ENCODE measurements at regions of chr22 and their contacts with region 1.

Region 1: GRCh38 chr22:30289134-30289979 is at the start of gene CASTOR1:
- DNase-seq: peak; percentile 99
- H3K4me3 ChIP-seq: peak within 1 kb of the TSS; percentile 54 to 84 (median 64)
- H3K27ac ChIP-seq: peak within 1 kb of the TSS; percentile 51
- H3K4me1 ChIP-seq: peaks cover 28% of the 10 kb centered on the region
- H3K27me3 ChIP-seq: no peaks in the 10 kb centered on the region
- CTCF ChIP-seq: no peak
- POLR2A ChIP-seq: peak; percentile 60
- total RNA-seq, gene CASTOR1: 7.2 and 8.1 TPM in 2 replicates

Region 2: GRCh38 chr22:30224161-30224857 is 65.0 kb before region 1 on chr22:
- CTCF ChIA-PET with region 1: no interaction called
- POLR2A ChIA-PET with region 1: no interaction called
- dilution Hi-C with region 1: no loop called
- intact Hi-C with region 1: no loop called
- DNase-seq: no peak
- H3K4me3 ChIP-seq: no peak overlapping the region
- H3K27ac ChIP-seq: no peak overlapping the region
- H3K4me1 ChIP-seq: no peaks in the 10 kb centered on the region
- H3K27me3 ChIP-seq: peaks cover 8 to 26% of the 10 kb centered on the region in 2 experiments
- CTCF ChIP-seq: no peak
- POLR2A ChIP-seq: no peak

Region 3: DNA sequence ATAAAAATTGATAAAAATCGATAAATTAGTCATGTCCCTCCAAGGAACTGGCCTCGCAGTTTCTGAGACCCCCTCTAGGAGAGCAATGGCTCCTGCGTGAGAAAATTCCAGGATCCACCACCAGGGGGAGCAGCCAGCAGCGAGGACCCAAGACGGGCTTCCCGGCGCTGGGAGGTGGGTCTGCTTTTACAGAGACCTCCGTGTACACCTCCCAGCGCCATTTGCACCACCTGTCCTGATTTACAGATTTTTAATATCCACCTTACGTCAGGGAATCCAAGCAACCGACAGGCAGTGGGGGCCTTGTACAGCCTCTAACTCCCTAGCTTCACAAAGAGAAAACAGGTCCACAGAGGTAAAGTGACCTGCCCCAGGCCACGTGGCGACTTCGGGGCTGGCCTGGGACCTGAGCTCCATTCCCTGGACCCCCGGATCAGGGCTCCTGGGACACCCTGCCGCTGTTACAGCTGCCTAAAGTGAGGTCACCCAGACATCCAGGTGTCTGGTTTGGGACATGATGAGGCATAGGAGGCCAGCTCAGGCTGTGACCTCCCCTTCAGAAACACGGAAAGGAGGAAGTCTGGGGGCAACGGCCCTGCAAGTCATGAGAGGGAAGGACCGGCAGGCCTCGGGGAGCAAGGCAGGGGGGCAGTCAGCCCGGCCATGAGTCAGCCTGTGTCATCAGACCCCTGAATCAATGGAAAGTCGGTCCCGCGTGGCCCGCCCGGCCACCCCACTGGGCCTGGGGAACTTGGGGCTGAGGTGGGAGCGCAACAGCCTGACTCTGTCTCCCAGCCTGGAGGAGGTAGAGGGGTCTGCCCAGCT is 26.2 kb before region 1 on chr22:
- CTCF ChIA-PET with region 1: interaction called, 12 read pairs
- POLR2A ChIA-PET with region 1: no interaction called
- dilution Hi-C with region 1: no loop called
- intact Hi-C with region 1: loop called (anchors 1 kb)
- DNase-seq: peak; percentile 57
- H3K4me3 ChIP-seq: no peak overlapping the region
- H3K27ac ChIP-seq: no peak overlapping the region
- H3K4me1 ChIP-seq: peaks cover 6% of the 10 kb centered on the region
- H3K27me3 ChIP-seq: no peaks in the 10 kb centered on the region
- CTCF ChIP-seq: peak; percentile 82 to 93
- POLR2A ChIP-seq: no peak

Region 4: DNA sequence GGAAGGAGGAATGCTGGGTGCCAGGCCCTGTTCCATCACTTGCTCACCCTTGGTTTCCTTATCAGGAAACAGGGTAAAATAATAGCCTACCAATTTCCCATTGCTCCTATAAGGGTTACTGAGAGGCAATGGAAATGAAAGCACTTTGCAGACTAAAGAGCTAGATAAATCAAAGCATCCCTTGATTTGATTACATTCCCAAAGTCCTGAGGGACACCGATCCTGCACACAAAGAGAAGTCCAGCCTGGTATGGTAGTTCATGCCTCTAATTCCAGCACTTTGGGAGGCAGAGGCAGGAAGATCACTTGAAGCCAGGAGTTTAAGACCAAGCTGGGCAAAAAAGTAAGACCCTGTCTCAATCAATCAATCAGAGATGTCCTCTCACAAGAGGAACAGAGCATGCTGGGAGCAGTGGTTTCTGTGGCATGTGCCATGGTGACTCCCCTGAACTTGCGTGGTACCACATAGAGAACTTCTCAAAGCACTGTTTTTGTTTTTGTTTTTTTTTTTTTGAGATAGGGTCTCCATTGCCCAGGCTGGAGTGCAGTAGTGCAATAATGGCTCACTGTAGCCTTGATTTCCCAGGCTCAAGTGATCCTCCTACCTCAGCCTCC is 26.7 kb after region 1 on chr22:
- CTCF ChIA-PET with region 1: interaction called, 13 read pairs
- POLR2A ChIA-PET with region 1: no interaction called
- dilution Hi-C with region 1: no loop called
- intact Hi-C with region 1: no loop called
- DNase-seq: no peak
- H3K4me3 ChIP-seq: no peak overlapping the region
- H3K27ac ChIP-seq: no peak overlapping the region
- H3K4me1 ChIP-seq: no peaks in the 10 kb centered on the region
- H3K27me3 ChIP-seq: no peaks in the 10 kb centered on the region
- CTCF ChIP-seq: no peak
- POLR2A ChIP-seq: no peak

Region 5: GRCh38 chr22:30356449-30357235 is 67.3 kb after region 1 on chr22 and contains the starts of genes CCDC157 and SF3A1:
- CTCF ChIA-PET with region 1: interaction called, 17 read pairs
- POLR2A ChIA-PET with region 1: interaction called, 9 read pairs
- dilution Hi-C with region 1: no loop called
- intact Hi-C with region 1: loop called (anchors 1 kb)
- DNase-seq: peak; percentile 95
- H3K4me3 ChIP-seq: peak within 1 kb of the TSS; percentile 64 to 94 (median 84)
- H3K27ac ChIP-seq: peak within 1 kb of the TSS; percentile 81
- H3K4me1 ChIP-seq: peaks cover 15% of the 10 kb centered on the region
- H3K27me3 ChIP-seq: no peaks in the 10 kb centered on the region
- CTCF ChIP-seq: no peak
- POLR2A ChIP-seq: peak; percentile 94
- total RNA-seq, gene CCDC157: 1.7 and 2.1 TPM in 2 replicates
- total RNA-seq, gene SF3A1: 173 and 187 TPM in 2 replicates

Region 6: GRCh38 chr22:30423982-30424963 is 134.9 kb after region 1 on chr22:
- CTCF ChIA-PET with region 1: interaction called, 18 read pairs
- POLR2A ChIA-PET with region 1: interaction called, 4 read pairs
- dilution Hi-C with region 1: no loop called
- intact Hi-C with region 1: loop called (anchors 1 kb)
- DNase-seq: peak; percentile 100
- H3K4me3 ChIP-seq: peak overlapping the region; percentile 2 to 28 (median 19)
- H3K27ac ChIP-seq: peak overlapping the region; percentile 98
- H3K4me1 ChIP-seq: peaks cover 59% of the 10 kb centered on the region
- H3K27me3 ChIP-seq: no peaks in the 10 kb centered on the region
- CTCF ChIP-seq: peak in 1 of 2 donors; percentile 5
- POLR2A ChIP-seq: peak; percentile 72

Measured in endothelial cell of umbilical vein (primary cell).